Common myeloid progenitor, CD34-positive (primary cell): ENCODE measurements at regions of chr20 and their contacts with region 1.

Region 1: GRCh38 chr20:23361598-23362384 is at the start of gene GZF1:
- DNase-seq: peak; percentile 97 to 99 (median 99)
- H3K4me3 ChIP-seq: peak within 1 kb of the TSS; percentile 62 to 85 (median 77)
- H3K27ac ChIP-seq: peak within 1 kb of the TSS; percentile 69 to 94
- H3K4me1 ChIP-seq: peaks cover 29 to 58% (median 48%) of the 10 kb centered on the region in 4 experiments
- H3K27me3 ChIP-seq: no peaks in the 10 kb centered on the region

Region 2: GRCh38 chr20:23187751-23188150 is 174.0 kb before region 1 on chr20:
- CTCF ChIA-PET with region 1: no interaction called
- POLR2A ChIA-PET with region 1: no interaction called
- DNase-seq: peak; percentile 34 to 92 (median 78)
- H3K4me3 ChIP-seq: no peak overlapping the region
- H3K27ac ChIP-seq: no peak overlapping the region
- H3K4me1 ChIP-seq: no peaks in the 10 kb centered on the region
- H3K27me3 ChIP-seq: no peaks in the 10 kb centered on the region

Region 3: DNA sequence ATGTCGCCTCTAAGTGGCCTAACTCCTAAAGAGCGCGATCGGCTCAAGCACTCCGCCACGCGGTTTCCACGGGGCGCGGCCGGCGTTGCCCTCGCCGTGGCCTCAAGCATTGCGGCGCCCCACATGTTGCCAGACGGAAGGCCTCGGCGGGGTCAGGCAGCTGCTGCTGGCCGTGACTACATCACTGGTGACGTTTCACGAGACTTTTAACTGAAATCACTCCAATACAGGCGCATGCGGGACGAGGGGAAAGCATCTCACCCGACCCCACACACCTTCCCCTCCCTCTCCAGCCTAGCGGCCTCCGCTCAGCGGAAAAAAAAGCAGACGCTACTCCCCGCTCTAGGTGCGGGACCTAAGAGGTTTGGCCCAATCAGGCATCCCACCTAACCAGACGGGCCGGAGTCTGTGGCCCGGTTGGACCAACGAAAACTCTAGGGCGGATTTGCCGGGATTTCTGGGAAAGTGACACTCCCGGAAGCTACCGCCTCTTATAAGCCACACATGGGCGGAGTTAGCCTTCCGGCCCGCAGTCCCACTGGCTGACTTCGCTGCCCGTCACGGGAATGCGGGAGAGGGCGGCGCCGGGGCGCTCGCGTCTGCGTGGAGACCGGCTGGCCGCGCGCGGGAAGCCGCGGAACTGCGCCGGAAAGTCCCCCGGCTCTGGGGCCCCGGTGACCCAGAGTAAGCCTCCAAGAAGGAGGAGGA is 11.4 kb before region 1 on chr20 and contains the start of gene NXT1:
- CTCF ChIA-PET with region 1: interaction called, 36 read pairs
- POLR2A ChIA-PET with region 1: interaction called, 17 read pairs
- DNase-seq: peak; percentile 96 to 98 (median 97)
- H3K4me3 ChIP-seq: peak within 1 kb of the TSS; percentile 60 to 97 (median 84)
- H3K27ac ChIP-seq: peak within 1 kb of the TSS; percentile 85 to 90
- H3K4me1 ChIP-seq: peaks cover 18 to 29% (median 26%) of the 10 kb centered on the region in 4 experiments
- H3K27me3 ChIP-seq: no peaks in the 10 kb centered on the region